CD4-positive, alpha-beta memory T cell (primary cell): ENCODE measurements at regions of chr13 and their contacts with region 1.

Region 1: DNA sequence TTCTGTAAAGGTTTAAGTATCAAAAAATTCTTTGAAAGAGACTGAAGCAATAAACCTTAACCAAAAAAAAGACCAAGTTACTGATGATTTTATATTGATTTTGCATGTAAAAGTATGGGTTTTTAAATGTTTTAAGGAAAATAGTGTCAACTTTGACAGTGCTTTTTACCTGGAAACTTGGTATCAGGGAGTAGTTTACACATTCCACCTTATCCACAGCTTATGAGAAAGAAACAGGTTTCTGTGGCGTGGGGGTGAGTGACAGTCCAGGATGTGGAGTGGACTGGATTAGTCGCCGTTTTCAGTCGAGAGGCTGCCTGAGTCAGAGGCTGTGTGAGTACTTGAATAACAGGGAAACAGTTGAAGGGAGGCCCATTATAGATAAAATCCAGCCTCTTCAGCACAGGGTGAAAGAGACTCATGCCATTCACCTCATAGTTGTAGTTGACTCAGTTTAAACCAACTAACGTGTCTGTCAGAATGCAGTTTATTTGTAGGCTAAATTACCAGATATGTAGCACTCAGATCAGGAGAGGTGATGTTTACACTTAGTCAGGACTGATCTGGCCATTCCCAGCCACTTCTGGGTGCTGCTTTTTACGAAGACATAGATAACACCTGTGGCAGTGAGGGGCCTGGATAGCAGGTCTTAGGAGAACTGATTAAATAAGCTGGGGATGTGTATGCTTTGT is 595 bp upstream of the GPR183 start:
- DNase-seq: peak in 2 of 5 donors; percentile 49 to 83
- H3K4me3 ChIP-seq: peak overlapping the region; percentile 47 to 78
- H3K4me3 Mint-ChIP-seq: peak overlapping the region; percentile 88 to 100 (median 99)
- H3K27ac ChIP-seq: peak overlapping the region; percentile 77
- H3K27ac Mint-ChIP-seq: peak overlapping the region; percentile 88 to 99 (median 96)
- H3K4me1 ChIP-seq: peaks cover 71% of the 10 kb centered on the region
- H3K4me1 Mint-ChIP-seq: peaks cover 48 to 82% (median 58%) of the 10 kb centered on the region in 4 donors
- H3K27me3 ChIP-seq: no peaks in the 10 kb centered on the region
- H3K27me3 Mint-ChIP-seq: no peaks in the 10 kb centered on the region

Region 2: DNA sequence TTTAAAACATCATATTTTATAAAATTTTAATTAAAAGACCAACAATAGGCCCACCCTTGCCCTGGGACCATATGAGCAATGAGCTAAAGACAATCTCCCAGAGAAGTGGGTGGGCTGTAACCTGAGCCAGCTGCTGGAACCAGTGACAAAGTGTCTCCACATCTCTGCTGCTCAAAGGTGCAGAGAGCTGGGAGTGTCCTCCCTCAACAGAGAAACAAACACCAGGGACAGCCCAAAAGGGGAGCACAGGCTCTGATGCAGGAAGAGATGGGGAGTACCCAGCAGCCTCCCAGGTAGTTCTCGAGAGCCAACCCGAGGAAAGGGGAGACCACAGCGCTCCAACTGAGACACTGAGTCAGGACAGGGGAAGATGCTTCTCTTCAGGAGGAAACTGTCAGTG is 369.0 kb before region 1 on chr13:
- CTCF ChIA-PET with region 1: no interaction called
- POLR2A ChIA-PET with region 1: no interaction called
- intact Hi-C with region 1: no loop called
- DNase-seq: no peak
- H3K4me3 ChIP-seq: no peak overlapping the region
- H3K4me3 Mint-ChIP-seq: no peak overlapping the region
- H3K27ac ChIP-seq: no peak overlapping the region
- H3K27ac Mint-ChIP-seq: peak overlapping the region in 1 of 7 donors; percentile 23
- H3K4me1 ChIP-seq: no peaks in the 10 kb centered on the region
- H3K4me1 Mint-ChIP-seq: peaks cover 23 to 47% (median 26%) of the 10 kb centered on the region in 4 donors
- H3K27me3 ChIP-seq: no peaks in the 10 kb centered on the region
- H3K27me3 Mint-ChIP-seq: no peaks in the 10 kb centered on the region

Region 3: DNA sequence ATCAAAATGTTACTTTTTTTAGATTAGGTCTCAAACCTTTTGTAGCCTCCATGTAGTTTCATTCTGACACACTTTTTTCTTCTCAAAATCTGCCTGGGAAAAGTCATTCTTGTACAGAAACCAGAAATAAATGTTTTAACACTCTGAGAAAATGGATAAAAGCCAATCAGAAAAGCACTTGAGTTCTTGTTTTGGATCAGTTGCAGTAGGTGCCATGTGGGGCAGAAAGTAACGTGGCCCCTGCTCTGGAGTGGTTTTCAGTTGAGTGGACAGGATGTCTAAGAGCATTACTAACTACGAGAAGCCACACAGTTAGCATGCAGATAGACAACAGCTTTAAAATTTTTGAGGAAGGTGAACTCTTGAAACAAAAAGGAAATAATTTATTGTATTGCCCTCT is 19.7 kb before region 1 on chr13:
- CTCF ChIA-PET with region 1: interaction called, 12 read pairs
- POLR2A ChIA-PET with region 1: interaction called, 406 read pairs
- intact Hi-C with region 1: loop called (anchors 1 kb)
- DNase-seq: no peak
- H3K4me3 ChIP-seq: no peak overlapping the region
- H3K4me3 Mint-ChIP-seq: peak overlapping the region; percentile 33 to 84 (median 60)
- H3K27ac ChIP-seq: peak overlapping the region; percentile 18
- H3K27ac Mint-ChIP-seq: peak overlapping the region; percentile 88 to 95 (median 89)
- H3K4me1 ChIP-seq: peaks cover 95% of the 10 kb centered on the region
- H3K4me1 Mint-ChIP-seq: peaks cover 65 to 100% (median 81%) of the 10 kb centered on the region in 4 donors
- H3K27me3 ChIP-seq: no peaks in the 10 kb centered on the region
- H3K27me3 Mint-ChIP-seq: no peaks in the 10 kb centered on the region

Region 4: DNA sequence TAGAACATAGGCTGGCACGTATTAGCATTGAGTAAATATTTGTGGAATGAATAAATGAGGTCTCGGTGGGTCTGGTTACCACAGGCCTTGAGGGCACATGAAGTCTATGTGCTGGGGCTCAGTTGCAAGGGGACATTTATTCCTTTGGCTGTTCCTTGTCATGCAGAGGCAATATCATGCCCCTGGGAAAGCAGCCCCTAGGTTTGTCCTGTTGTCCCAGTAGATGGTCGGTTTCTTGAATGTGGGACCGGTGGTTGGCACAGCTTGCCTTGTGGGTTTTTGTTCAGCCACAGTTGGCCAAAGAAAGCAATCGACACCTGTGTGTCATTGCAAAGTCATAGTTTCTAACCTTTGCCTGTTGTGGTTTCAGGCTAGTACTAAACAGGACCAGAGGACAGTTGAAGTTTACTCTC is 24.1 kb after region 1 on chr13:
- CTCF ChIA-PET with region 1: interaction called, 3 read pairs
- POLR2A ChIA-PET with region 1: interaction called, 33 read pairs
- intact Hi-C with region 1: no loop called
- DNase-seq: no peak
- H3K4me3 ChIP-seq: no peak overlapping the region
- H3K4me3 Mint-ChIP-seq: peak overlapping the region in 1 of 8 donors; percentile 16
- H3K27ac ChIP-seq: no peak overlapping the region
- H3K27ac Mint-ChIP-seq: peak overlapping the region in 1 of 7 donors; percentile 51
- H3K4me1 ChIP-seq: peaks cover 42% of the 10 kb centered on the region
- H3K4me1 Mint-ChIP-seq: peaks cover 34 to 69% (median 52%) of the 10 kb centered on the region in 4 donors
- H3K27me3 ChIP-seq: no peaks in the 10 kb centered on the region
- H3K27me3 Mint-ChIP-seq: no peaks in the 10 kb centered on the region

Region 5: GRCh38 chr13:99356158-99357091 is 48.6 kb after region 1 on chr13:
- CTCF ChIA-PET with region 1: interaction called, 32 read pairs
- POLR2A ChIA-PET with region 1: interaction called, 929 read pairs
- intact Hi-C with region 1: loop called (anchors 1 kb)
- DNase-seq: peak; percentile 88 to 95 (median 92)
- H3K4me3 ChIP-seq: peak overlapping the region; percentile 13 to 37
- H3K4me3 Mint-ChIP-seq: peak overlapping the region; percentile 30 to 82 (median 73)
- H3K27ac ChIP-seq: peak overlapping the region; percentile 94
- H3K27ac Mint-ChIP-seq: peak overlapping the region; percentile 96 to 100 (median 99)
- H3K4me1 ChIP-seq: peaks cover 98% of the 10 kb centered on the region
- H3K4me1 Mint-ChIP-seq: peaks cover 90 to 100% (median 96%) of the 10 kb centered on the region in 4 donors
- H3K27me3 ChIP-seq: no peaks in the 10 kb centered on the region
- H3K27me3 Mint-ChIP-seq: no peaks in the 10 kb centered on the region

Region 6: DNA sequence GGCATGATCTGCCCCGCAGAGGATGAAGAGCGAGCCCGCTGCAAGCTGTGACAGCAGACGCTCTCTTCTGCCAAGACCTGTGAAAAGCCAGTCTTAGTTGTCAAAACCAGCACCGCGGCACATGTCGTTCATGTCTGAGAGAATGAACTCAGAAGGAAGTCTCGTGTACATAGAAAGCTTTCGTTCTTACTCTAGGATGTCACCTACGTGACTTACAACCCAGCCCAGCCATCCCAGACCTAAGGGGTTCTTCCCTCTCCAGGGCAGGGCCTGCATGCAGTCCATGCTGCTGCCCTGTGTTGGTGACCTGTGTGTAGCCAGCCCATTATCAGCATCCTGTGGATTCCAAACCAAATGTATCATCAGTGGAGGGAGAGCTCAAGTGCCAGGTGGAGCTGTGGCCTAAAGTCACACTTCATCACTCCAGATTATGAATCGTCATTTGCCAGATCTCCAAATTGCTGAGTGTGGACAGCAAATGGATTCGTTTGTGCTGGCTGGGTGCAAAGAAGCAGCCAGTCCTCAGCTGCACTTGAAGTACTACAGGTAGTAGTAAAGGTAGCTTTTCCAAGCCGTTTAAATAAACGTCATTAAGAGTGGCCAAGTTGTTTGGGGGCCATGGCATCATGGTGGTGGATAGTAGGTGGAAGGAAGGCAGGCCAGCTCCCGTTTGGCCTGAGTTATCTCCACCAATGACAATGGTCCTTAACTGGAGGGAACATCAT is 73.3 kb after region 1 on chr13:
- CTCF ChIA-PET with region 1: interaction called, 142 read pairs
- POLR2A ChIA-PET with region 1: interaction called, 361 read pairs
- intact Hi-C with region 1: loop called (anchors 1 kb)
- DNase-seq: peak in 4 of 5 donors; percentile 52 to 67 (median 61)
- H3K4me3 ChIP-seq: peak overlapping the region in 1 of 2 donors; percentile 0
- H3K4me3 Mint-ChIP-seq: peak overlapping the region in 7 of 8 donors; percentile 61 to 89 (median 73)
- H3K27ac ChIP-seq: peak overlapping the region; percentile 51
- H3K27ac Mint-ChIP-seq: peak overlapping the region; percentile 92 to 99 (median 96)
- H3K4me1 ChIP-seq: peaks cover 87% of the 10 kb centered on the region
- H3K4me1 Mint-ChIP-seq: peaks cover 70 to 97% (median 87%) of the 10 kb centered on the region in 4 donors
- H3K27me3 ChIP-seq: no peaks in the 10 kb centered on the region
- H3K27me3 Mint-ChIP-seq: no peaks in the 10 kb centered on the region

Region 7: GRCh38 chr13:99501184-99501847 is 193.5 kb after region 1 on chr13 and contains the start of gene TM9SF2:
- CTCF ChIA-PET with region 1: no interaction called
- POLR2A ChIA-PET with region 1: interaction called, 10 read pairs
- intact Hi-C with region 1: no loop called
- DNase-seq: peak; percentile 96 to 98 (median 97)
- H3K4me3 ChIP-seq: peak within 1 kb of the TSS; percentile 57 to 72
- H3K4me3 Mint-ChIP-seq: peak within 1 kb of the TSS; percentile 89 to 99 (median 98)
- H3K27ac ChIP-seq: peak within 1 kb of the TSS; percentile 86
- H3K27ac Mint-ChIP-seq: peak within 1 kb of the TSS; percentile 98 to 99 (median 98)
- H3K4me1 ChIP-seq: peaks cover 86% of the 10 kb centered on the region
- H3K4me1 Mint-ChIP-seq: peaks cover 49 to 94% (median 71%) of the 10 kb centered on the region in 4 donors
- H3K27me3 ChIP-seq: no peaks in the 10 kb centered on the region
- H3K27me3 Mint-ChIP-seq: no peaks in the 10 kb centered on the region
- total RNA-seq, gene TM9SF2: 60.0 to 64.2 TPM